ENCODE measurements at regions of chr16 and their contacts with region 1.

Region 1: DNA sequence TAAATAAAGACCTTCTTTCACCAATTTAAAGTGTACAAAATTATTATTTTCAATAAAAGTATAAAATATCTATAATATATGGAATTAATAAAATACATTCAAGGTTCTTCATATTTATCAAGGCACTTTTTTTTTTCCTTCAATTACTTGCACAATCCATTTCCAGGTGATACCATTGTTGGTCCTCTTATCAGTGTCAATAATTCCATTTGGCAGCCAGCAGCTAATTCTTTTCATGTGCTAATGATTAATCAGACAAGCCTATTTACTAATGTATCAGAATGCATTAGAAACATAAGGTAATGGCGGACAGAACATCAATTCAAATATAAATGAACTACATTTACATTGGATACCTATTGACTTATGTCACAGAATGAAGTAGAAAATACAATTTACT is 622.2 kb downstream of the TOX3 start:
- DNase-seq: no peak
- H3K4me3 ChIP-seq: no peak overlapping the region
- H3K27ac ChIP-seq: no peak overlapping the region
- H3K4me1 ChIP-seq: no peaks in the 10 kb centered on the region
- H3K27me3 ChIP-seq: no peaks in the 10 kb centered on the region
- CTCF ChIP-seq: no peak
- EP300 ChIP-seq: no peak
- POLR2A ChIP-seq: no peak

Region 2: DNA sequence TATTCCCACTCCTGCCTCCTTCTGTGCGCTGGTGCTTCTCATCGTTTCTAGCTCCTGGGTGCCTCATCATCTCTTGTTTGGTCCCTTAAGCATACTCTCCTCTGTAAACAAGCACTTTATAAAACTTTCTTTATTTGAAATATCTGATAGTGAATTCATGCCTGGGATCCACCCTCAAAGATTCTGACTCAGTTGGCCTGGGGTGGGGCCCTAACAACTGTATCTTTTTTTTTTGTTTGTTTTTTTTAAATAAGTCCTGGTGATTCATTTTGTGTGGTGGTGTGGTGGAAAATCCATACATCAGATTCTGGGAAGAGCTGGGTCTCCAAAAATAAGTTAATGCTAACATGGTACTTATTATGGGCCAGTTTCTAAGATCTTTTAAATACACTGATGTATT is 56.1 kb before region 1 on chr16:
- intact Hi-C with region 1: loop called (anchors 2 kb)
- DNase-seq: no peak
- H3K4me3 ChIP-seq: no peak overlapping the region
- H3K27ac ChIP-seq: no peak overlapping the region
- H3K4me1 ChIP-seq: no peaks in the 10 kb centered on the region
- H3K27me3 ChIP-seq: peaks cover 0 to 13% (median 0%) of the 10 kb centered on the region in 4 donors
- CTCF ChIP-seq: no peak
- EP300 ChIP-seq: no peak
- POLR2A ChIP-seq: no peak

Region 3: DNA sequence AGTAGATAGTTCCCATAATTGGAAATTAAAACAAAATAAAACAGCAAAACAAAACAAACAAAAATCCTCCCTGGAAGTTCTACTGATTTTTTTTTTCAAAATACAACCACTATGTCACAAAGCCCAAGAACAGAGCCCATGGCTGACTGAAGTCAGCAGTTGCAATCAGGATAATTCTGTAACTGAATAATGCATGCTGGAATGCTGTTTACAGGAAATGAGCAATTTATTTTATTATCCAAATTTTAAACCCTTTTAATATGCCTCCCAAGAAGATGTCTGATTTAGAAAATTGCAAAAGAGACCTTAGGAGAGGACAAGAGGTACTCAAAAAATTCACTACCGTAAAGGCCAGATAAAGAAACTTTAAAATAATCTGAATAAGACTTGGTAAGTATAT is 44.0 kb after region 1 on chr16:
- intact Hi-C with region 1: no loop called
- DNase-seq: no peak
- H3K4me3 ChIP-seq: no peak overlapping the region
- H3K27ac ChIP-seq: no peak overlapping the region
- H3K4me1 ChIP-seq: no peaks in the 10 kb centered on the region
- H3K27me3 ChIP-seq: peaks cover 0 to 3% (median 0%) of the 10 kb centered on the region in 4 donors
- CTCF ChIP-seq: no peak
- EP300 ChIP-seq: no peak
- POLR2A ChIP-seq: no peak

Region 4: DNA sequence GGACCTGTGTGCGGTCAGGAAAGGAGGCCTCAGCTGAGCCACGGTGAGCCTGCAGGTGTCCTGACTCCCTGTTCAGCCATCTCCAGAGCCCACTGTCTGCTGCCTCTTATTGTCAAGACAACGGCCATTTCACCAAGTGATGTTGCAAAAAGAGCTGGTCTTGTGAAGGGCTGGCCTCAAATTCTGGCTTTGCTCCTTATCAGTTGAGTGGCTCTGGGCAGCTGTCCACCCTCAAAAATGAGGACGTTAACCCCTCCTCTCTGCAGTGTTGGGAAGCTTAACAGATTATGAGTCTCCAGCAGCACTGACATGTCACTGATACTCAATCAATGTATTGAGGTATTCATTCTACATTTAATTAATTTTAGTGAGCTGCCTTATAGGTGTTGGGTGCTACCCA is 793.3 kb after region 1 on chr16:
- intact Hi-C with region 1: no loop called
- DNase-seq: no peak
- H3K4me3 ChIP-seq: no peak overlapping the region
- H3K27ac ChIP-seq: no peak overlapping the region
- H3K4me1 ChIP-seq: no peaks in the 10 kb centered on the region
- H3K27me3 ChIP-seq: peaks cover 0 to 28% (median 0%) of the 10 kb centered on the region in 4 donors
- CTCF ChIP-seq: no peak
- EP300 ChIP-seq: no peak
- POLR2A ChIP-seq: no peak